ENCODE measurements at regions of chr22 and their contacts with region 1.

Region 1: GRCh38 chr22:24466716-24467328 is 28.3 kb upstream of the UPB1 start:
- DNase-seq: peak; percentile 13 to 63
- H3K4me3 ChIP-seq: no peak overlapping the region
- H3K27ac ChIP-seq: peak overlapping the region; percentile 59
- H3K4me1 ChIP-seq: peaks cover 36% of the 10 kb centered on the region
- H3K27me3 ChIP-seq: no peaks in the 10 kb centered on the region
- CTCF ChIP-seq: no peak

Region 2: DNA sequence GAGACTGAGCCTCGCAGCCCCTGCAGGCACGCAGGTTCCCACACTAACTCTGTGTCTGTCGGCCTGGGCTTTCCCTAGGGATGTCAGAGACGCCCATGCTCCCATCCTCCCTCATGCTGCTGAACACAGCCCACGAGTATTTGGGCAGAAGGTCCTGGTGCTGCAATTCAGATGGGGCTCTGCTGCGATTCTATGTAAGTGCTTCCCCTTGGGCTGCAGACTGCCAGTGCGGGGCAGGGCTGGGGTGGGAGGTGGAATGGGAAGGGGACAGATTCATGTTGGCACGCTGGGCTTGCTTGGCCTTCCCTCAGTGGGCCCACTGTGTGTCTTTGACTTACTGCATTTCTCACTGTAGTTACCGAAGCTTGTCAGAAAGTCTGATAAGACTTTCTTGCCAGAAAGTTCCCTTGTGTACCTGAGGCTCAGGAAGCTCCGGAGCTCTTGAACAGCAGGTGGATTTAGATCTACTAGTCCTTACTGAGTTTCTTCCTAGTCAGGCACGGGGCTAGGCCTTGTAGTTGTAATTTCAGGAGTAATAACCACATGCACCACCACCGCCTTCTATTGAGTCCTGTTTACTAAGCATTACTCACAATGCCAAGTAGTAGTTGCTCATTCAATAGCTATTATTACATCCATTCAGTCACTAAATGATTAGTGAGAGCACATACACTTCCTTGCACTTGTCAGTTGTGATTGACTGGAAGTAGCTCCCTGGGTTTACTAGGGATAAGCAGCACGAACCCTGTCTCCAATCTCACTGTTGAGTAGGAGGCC is 390.5 kb before region 1 on chr22:
- CTCF ChIA-PET with region 1: interaction called, 15 read pairs
- POLR2A ChIA-PET with region 1: no interaction called
- intact Hi-C with region 1: no loop called
- DNase-seq: no peak
- H3K4me3 ChIP-seq: no peak overlapping the region
- H3K27ac ChIP-seq: no peak overlapping the region
- H3K4me1 ChIP-seq: no peaks in the 10 kb centered on the region
- H3K27me3 ChIP-seq: no peaks in the 10 kb centered on the region
- CTCF ChIP-seq: no peak

Region 3: DNA sequence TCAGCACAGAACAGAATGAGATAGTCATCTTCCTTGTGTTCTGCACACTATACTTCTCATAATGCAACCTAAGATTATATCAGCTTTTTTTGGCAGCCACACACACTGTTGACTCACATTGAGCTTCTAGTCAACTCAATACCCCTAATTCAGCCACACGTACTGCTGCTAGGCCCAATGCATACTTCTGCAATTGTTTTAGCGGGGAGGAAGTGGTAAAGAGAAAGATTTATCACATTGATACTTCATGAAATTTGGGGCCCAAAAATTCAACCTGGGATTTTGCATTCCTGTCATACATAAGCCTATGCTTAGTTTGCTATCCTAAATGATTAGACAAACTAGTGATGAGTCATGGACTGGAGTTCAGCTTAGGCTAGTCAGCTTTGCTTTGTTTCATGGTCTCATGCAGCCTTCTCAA is 19.7 kb after region 1 on chr22:
- CTCF ChIA-PET with region 1: interaction called, 3 read pairs
- POLR2A ChIA-PET with region 1: interaction called, 8 read pairs
- intact Hi-C with region 1: loop called (anchors 1 kb)
- DNase-seq: peak; percentile 34 to 97
- H3K4me3 ChIP-seq: no peak overlapping the region
- H3K27ac ChIP-seq: peak overlapping the region; percentile 75
- H3K4me1 ChIP-seq: peaks cover 65% of the 10 kb centered on the region
- H3K27me3 ChIP-seq: no peaks in the 10 kb centered on the region
- CTCF ChIP-seq: no peak

Region 4: DNA sequence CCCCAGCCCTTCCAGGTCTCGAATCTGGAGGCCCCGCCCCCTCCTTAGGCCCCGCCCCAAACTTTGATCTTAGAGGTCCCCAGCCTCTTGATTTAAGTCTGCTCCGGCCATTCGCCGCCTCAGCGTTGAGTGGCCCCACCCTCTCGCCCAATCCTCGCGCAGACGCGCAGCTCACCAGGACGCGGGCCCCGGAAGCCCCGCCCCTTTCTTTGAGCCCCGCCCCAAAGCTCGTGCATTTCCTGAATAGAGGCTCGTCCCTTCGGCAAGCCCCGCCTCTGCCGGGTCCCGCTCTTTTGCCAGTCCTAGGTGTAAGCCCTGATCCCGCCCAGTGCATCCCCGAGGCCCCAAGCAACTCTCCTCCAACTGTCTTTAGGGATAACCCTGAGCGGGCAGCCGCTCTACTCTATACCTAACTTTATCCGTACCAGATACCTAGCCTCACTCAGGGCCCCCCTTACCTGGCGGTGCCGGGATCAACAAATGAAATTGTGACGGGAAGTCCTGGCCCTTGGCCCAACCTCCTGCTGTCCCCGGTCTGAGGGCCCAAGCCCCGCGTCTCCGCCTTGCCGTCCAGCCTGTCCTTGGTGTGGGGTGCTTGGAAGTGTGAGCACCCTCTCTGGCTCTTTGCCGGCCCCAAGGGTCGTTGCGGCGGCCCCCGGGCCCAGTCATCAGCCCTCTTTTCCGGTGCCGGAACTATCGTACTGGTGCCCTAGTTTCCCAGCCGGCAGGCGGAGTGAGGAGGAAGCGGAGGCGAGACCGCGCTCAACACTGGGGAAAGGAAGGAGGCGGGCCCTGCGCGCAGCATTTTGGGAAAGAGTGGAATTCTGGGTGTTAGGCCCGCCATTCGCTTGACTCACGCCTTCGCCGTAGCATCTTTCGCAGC is 88.6 kb after region 1 on chr22 and contains the start of gene SNRPD3:
- CTCF ChIA-PET with region 1: no interaction called
- POLR2A ChIA-PET with region 1: interaction called, 18 read pairs
- intact Hi-C with region 1: no loop called
- DNase-seq: peak; percentile 94 to 95
- H3K4me3 ChIP-seq: peak within 1 kb of the TSS; percentile 100
- H3K27ac ChIP-seq: peak within 1 kb of the TSS; percentile 75
- H3K4me1 ChIP-seq: peaks cover 20% of the 10 kb centered on the region
- H3K27me3 ChIP-seq: no peaks in the 10 kb centered on the region
- CTCF ChIP-seq: no peak; the same call in 1 of the 2 replicates
- total RNA-seq, gene SNRPD3: 77.1 and 117 TPM in 2 replicates

Region 5: DNA sequence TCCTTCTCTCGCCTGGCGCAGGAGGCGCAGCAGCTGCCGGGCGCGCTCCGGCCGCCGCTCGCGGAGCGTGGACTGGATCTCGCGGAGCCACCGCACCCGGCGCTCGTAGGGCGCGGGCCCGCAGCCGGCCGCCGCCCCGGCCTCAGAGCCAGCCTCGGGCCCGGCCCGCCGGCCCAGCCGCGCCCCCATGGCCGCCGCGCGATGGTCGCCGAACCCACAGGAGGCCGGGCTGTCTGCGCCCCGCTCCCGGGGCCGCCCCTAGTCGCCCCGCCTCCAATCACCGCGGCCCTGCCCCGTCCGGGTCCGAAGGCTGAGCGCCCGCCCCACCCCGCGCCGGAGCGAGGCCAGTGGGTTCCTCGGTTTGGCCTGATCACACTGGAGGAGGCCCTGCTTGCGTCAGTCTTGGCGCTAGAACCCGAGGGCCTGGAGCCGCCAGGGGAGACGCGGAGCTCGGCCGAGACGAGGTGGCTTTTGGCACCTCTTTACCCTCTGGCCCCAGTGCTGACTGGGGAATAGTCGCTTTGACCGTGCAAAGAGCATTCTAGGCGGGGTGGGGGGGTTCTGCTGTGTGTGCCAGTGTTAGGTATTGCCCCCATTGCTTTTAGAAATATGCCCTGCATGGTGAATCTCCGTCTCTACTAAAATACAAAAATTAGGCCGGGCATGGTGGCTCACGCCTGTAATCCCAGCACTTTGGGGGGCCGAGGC is 126.2 kb after region 1 on chr22 and contains the start of gene LRRC75B:
- CTCF ChIA-PET with region 1: no interaction called
- POLR2A ChIA-PET with region 1: no interaction called
- intact Hi-C with region 1: no loop called
- DNase-seq: peak; percentile 52 to 60
- H3K4me3 ChIP-seq: peak within 1 kb of the TSS; percentile 61; the same call in 1 of the 2 replicates
- H3K27ac ChIP-seq: no peak within 1 kb of the TSS
- H3K4me1 ChIP-seq: peaks cover 12% of the 10 kb centered on the region
- H3K27me3 ChIP-seq: no peaks in the 10 kb centered on the region
- CTCF ChIP-seq: no peak
- total RNA-seq, gene LRRC75B: 2.2 and 4.5 TPM in 2 replicates